B cell (primary cell): ENCODE measurements at regions of chr4 and their contacts with region 1.

Region 1: DNA sequence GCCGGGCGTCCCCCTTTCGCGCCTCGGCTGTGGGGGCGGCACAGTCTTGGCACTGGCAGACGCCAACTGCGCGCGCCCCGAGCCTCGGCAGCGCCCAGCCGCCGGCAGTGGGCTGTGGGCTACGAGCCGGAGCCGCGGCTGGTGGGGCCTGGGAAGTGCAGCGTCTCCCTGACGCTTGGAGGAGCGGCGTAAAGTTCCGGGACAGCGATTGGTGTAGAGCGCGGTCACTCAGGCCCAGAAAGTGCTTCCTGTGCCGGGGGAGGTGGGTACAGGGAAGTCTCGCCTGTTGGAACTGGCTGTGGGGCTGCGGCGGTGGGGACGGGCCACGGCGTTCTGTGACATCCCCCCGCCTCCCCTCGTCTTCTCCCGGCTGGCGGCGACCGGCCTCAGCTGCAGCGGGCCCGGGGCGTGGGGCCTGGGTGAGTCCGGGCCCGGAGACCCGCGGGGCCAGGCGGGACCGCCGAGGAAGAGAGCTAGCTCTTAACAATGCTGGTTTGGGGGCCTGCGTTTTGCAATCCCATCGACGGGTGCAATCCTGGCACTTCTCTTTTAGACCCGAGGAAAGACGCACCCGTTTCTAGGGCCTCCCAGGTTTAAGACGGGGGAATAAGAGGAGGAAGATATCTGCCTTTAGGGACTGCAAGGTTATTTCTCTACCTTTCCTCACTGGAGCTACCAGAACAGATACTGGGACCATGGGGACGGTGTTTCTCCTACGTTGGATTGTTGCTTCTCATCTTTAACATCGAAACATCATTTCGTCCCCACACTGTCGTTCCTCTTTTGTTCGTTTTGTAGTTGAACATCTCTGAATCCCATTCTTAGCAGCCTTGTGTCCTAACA is at the starts of genes RWDD4 and TRAPPC11:
- DNase-seq: peak; percentile 97
- ATAC-seq: peak; percentile 98
- H3K4me3 ChIP-seq: peak within 1 kb of the TSS; percentile 62 to 91 (median 87)
- H3K4me3 Mint-ChIP-seq: peak within 1 kb of the TSS; percentile 93
- H3K27ac ChIP-seq: peak within 1 kb of the TSS; percentile 70 to 90
- H3K27ac Mint-ChIP-seq: peak within 1 kb of the TSS; percentile 93
- H3K4me1 ChIP-seq: peaks cover 17 to 24% of the 10 kb centered on the region in 2 donors
- H3K4me1 Mint-ChIP-seq: peaks cover 26% of the 10 kb centered on the region
- H3K27me3 ChIP-seq: no peaks in the 10 kb centered on the region
- H3K27me3 Mint-ChIP-seq: no peaks in the 10 kb centered on the region
- CTCF ChIP-seq: no peak
- total RNA-seq, gene RWDD4: 15.7 and 16.3 TPM in 2 replicates
- total RNA-seq, gene TRAPPC11: 53.8 and 56.6 TPM in 2 replicates

Region 2: GRCh38 chr4:183398227-183399125 is 260.8 kb before region 1 on chr4:
- CTCF ChIA-PET with region 1: no interaction called
- POLR2A ChIA-PET with region 1: no interaction called
- intact Hi-C with region 1: loop called (anchors 2 kb)
- DNase-seq: peak; percentile 74
- ATAC-seq: peak; percentile 84
- H3K4me3 ChIP-seq: peak overlapping the region; percentile 32 to 76 (median 65)
- H3K4me3 Mint-ChIP-seq: peak overlapping the region; percentile 87
- H3K27ac ChIP-seq: peak overlapping the region in 1 of 2 donors; percentile 56
- H3K27ac Mint-ChIP-seq: peak overlapping the region; percentile 50
- H3K4me1 ChIP-seq: peaks cover 12 to 23% of the 10 kb centered on the region in 2 donors
- H3K4me1 Mint-ChIP-seq: peaks cover 24% of the 10 kb centered on the region
- H3K27me3 ChIP-seq: peaks cover 0 to 9% (median 2%) of the 10 kb centered on the region in 4 experiments
- H3K27me3 Mint-ChIP-seq: peaks cover 13% of the 10 kb centered on the region
- CTCF ChIP-seq: no peak